ENCODE measurements at regions of chr16 and their contacts with region 1.

Region 1: DNA sequence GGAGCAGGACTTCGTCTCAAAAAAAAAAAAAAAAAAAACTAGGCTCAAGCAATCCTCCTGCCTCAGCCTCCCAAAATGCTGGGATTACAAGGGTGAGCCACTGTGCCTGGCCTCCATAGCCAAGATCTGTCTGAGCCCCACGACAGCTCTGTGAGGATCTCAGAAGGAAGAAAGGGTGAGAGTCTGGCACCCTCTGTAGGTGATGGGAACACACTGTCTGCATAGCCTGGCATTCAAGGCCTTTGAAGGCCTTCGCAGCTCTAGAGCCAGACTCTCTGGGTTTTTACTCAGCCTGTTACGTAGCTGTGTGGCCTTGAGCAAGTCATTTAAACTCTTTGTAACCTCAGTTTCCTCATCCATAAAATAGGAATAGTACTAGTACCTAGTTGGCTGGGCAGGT is 6.3 kb upstream of the XPO6 start:
- DNase-seq: peak; percentile 78
- H3K4me3 Mint-ChIP-seq: no peak overlapping the region
- H3K27ac Mint-ChIP-seq: no peak overlapping the region
- H3K4me1 Mint-ChIP-seq: peaks cover 6% of the 10 kb centered on the region
- H3K27me3 Mint-ChIP-seq: no peaks in the 10 kb centered on the region

Region 2: DNA sequence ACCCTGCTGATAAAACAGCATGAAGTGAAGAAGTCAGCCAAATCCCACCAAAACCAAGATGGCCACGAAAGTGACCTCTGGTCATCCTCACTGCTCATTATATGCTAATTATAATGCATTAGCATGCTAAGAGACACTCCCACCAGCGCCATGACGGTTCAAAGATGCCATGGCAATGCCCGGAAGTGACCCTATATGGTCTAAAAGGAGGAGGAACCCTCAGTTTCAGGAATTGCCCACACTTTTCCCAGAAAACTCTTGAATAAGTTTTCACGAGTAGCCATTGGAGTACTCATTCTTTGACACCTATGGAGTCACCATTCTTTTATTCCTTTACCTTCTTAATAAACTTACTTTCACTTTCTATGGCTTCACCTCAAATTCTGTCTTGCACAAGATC is 198.9 kb before region 1 on chr16:
- CTCF ChIA-PET with region 1: no interaction called
- POLR2A ChIA-PET with region 1: no interaction called
- DNase-seq: no peak
- H3K4me3 Mint-ChIP-seq: no peak overlapping the region
- H3K27ac Mint-ChIP-seq: no peak overlapping the region
- H3K4me1 Mint-ChIP-seq: no peaks in the 10 kb centered on the region
- H3K27me3 Mint-ChIP-seq: peaks cover 16% of the 10 kb centered on the region

Region 3: GRCh38 chr16:28098959-28099945 is 118.9 kb before region 1 on chr16:
- CTCF ChIA-PET with region 1: interaction called, 10 read pairs
- POLR2A ChIA-PET with region 1: no interaction called
- DNase-seq: no peak
- H3K4me3 Mint-ChIP-seq: no peak overlapping the region
- H3K27ac Mint-ChIP-seq: no peak overlapping the region
- H3K4me1 Mint-ChIP-seq: no peaks in the 10 kb centered on the region
- H3K27me3 Mint-ChIP-seq: no peaks in the 10 kb centered on the region

Region 4: GRCh38 chr16:28131743-28132393 is 86.2 kb before region 1 on chr16:
- CTCF ChIA-PET with region 1: interaction called, 17 read pairs
- POLR2A ChIA-PET with region 1: no interaction called
- DNase-seq: no peak
- H3K4me3 Mint-ChIP-seq: no peak overlapping the region
- H3K27ac Mint-ChIP-seq: no peak overlapping the region
- H3K4me1 Mint-ChIP-seq: peaks cover 9% of the 10 kb centered on the region
- H3K27me3 Mint-ChIP-seq: no peaks in the 10 kb centered on the region

Region 5: DNA sequence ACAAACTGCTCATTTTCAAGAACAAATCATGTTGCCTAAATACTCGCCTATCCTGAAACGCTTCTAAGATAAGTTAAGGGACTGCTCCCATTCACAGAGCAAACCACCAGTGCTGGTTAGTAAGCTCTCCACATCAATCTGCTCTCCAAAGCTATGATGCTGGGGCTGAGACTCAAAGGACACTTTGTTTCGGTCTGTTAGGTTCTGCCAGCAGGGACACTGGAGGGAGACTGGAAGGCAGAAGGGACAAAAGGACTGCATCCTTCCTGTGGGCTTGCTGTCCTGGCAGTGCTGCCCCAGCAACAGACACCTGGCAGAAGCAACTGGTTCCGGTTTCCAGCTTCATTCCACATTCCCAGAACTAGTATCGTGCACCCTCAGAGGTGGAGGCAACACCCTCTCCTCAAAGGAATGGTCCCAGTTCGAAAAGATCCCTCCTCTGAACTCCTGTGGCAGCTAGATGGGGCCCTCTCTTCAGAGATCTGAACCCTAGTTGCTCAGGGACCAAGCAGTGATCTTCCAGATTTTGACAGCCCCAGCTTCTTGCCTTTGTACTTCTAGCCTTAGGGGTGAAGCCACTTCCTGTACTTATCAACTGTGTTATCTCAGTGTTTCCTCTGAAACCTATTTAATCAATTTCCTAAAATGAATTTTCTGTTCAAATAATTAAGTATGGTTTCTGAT is 81.2 kb before region 1 on chr16:
- CTCF ChIA-PET with region 1: interaction called, 17 read pairs
- POLR2A ChIA-PET with region 1: no interaction called
- DNase-seq: peak; percentile 69
- H3K4me3 Mint-ChIP-seq: peak overlapping the region; percentile 35
- H3K27ac Mint-ChIP-seq: peak overlapping the region; percentile 85
- H3K4me1 Mint-ChIP-seq: peaks cover 53% of the 10 kb centered on the region
- H3K27me3 Mint-ChIP-seq: no peaks in the 10 kb centered on the region